ENCODE measurements at regions of chr3 and their contacts with region 1.

Region 1: DNA sequence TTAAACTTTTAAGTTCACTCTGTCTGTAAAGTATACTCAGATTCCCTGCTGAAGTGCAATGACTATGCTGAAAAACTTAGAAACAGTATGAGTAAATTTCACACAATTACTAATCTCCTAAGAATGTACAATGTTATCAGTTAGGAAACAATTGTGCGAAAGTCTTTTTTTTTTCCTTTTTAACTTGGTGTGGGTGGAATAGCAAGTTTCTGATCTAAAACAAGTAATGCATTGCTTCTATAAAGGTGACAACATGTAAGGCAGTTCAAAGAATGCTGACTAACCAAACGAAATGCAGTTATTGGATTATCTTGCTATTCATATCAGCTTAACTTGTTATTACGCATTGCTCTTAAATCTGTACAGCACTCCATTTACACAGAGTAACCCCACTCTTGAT is 19.3 kb upstream of the SLC12A8 start:
- DNase-seq: no peak
- H3K4me3 Mint-ChIP-seq: no peak overlapping the region
- H3K27ac Mint-ChIP-seq: peak overlapping the region; percentile 32
- H3K4me1 Mint-ChIP-seq: peaks cover 21% of the 10 kb centered on the region
- H3K27me3 Mint-ChIP-seq: no peaks in the 10 kb centered on the region
- CTCF ChIP-seq: no peak

Region 2: GRCh38 chr3:124730129-124730940 is 501.6 kb before region 1 on chr3 and contains the start of gene UMPS:
- CTCF ChIA-PET with region 1: no interaction called
- intact Hi-C with region 1: no loop called
- DNase-seq: peak; percentile 94
- H3K4me3 Mint-ChIP-seq: peak within 1 kb of the TSS; percentile 98
- H3K27ac Mint-ChIP-seq: peak within 1 kb of the TSS; percentile 98
- H3K4me1 Mint-ChIP-seq: peaks cover 19% of the 10 kb centered on the region
- H3K27me3 Mint-ChIP-seq: peaks cover 4% of the 10 kb centered on the region
- CTCF ChIP-seq: no peak
- total RNA-seq, gene UMPS: 62.1 and 73.0 TPM in 2 replicates

Region 3: GRCh38 chr3:125324341-125324740 is 92.4 kb after region 1 on chr3:
- CTCF ChIA-PET with region 1: no interaction called
- intact Hi-C with region 1: no loop called
- DNase-seq: no peak
- H3K4me3 Mint-ChIP-seq: no peak overlapping the region
- H3K27ac Mint-ChIP-seq: no peak overlapping the region
- H3K4me1 Mint-ChIP-seq: peaks cover 19% of the 10 kb centered on the region
- H3K27me3 Mint-ChIP-seq: no peaks in the 10 kb centered on the region
- CTCF ChIP-seq: no peak

Region 4: DNA sequence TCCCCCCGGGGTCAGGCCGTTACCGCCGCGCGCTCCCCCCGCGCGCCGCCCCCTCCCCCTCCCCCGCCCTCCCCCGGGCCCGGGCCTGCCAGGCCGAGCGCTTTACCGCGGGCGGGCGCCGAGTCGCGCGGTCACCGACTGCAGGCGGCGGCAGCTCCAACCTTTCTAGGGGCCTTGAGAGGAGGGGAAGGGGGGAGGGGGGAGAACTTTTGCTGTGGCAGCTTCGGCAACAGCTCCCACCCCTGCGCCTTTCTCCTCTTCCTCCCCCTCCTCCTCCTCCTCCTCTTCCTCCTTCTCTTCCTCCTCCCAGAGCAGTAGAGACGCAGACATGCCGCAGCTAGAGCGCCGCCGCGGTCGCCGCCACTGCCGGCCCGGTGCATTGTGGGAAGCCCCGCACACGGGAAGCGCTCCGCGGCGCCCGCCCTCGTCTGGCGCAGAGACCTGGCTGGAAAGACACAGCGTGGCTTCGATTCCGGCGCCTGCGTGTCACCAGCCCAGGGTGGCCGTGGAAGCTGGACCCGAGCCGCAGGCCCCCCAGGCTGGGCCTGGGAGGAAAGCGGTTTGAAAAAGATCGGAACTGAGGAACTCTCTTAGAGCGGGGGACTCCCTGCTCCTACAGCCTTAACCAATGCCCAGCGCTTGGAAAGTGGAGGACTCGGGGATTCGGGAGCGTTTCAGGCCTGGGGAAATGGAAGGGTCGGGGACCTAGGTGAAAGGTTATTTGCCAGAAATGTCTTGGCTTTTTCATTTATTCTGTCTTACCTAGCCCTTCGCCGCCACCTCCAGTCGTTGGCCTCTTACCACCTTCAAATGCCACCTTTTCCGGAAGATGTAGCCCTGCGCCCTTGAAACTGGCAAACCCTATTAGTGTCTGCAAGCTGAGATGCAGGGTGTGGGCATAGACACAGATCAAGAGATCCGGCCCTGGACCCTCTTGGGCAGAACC is 143.4 kb after region 1 on chr3 and contains the start of gene ZNF148:
- CTCF ChIA-PET with region 1: no interaction called
- intact Hi-C with region 1: loop called (anchors 5 kb)
- DNase-seq: peak; percentile 95
- H3K4me3 Mint-ChIP-seq: peak within 1 kb of the TSS; percentile 88
- H3K27ac Mint-ChIP-seq: peak within 1 kb of the TSS; percentile 79
- H3K4me1 Mint-ChIP-seq: peaks cover 13% of the 10 kb centered on the region
- H3K27me3 Mint-ChIP-seq: no peaks in the 10 kb centered on the region
- CTCF ChIP-seq: no peak
- total RNA-seq, gene ZNF148: 55.0 and 60.7 TPM in 2 replicates